ENCODE measurements at regions of chr12 and their contacts with region 1.

Region 1: DNA sequence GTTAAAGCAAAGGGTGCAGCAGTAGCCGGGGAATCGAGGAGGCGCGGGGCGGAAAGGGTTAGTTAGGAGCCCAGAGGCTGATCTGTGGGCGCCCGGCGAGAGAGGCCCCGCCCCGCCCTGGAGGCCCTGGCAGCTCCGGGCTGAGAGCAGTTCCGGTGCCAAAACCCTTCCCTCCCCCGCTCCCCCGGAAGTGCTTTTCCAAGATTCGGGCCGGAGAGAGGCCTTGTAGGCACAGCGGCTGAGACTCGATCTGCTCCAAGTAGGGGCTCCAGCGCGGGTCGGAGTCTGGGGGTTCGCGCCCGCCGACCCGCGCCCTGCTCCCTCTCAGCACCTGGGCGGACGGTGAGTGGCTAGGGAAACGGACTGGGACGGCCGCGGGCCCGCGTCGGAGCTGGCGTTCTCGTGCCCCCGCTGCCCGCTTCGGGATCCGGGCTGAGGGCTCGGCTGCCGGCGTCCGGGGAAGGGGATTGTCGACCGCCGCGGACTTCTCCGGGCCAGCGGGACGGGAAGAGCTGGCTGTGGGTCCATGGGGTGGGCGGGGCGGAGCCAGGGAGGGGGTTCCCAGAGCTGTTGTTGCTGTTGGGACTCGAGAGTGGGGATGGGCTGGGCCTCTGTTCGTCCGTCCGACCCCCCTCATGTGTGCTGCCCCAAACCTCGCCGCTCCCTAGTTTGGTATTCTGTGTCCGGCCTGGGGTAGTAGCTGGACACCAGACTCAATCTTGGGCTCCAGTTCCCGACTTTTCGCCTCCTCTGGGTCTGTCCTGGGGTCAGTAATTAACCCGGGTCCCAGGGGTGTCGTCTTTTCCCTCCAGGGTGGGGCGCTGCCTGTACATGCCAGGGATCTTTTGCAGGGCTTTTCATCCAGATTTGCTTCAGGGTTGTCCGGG is at the start of gene FRS2:
- DNase-seq: peak; percentile 72
- ATAC-seq: peak; percentile 95
- H3K4me3 ChIP-seq: peak within 1 kb of the TSS; percentile 78 to 87
- H3K27ac ChIP-seq: peak within 1 kb of the TSS; percentile 70
- H3K4me1 ChIP-seq: peaks cover 8 to 10% of the 10 kb centered on the region in 2 experiments; a peak in 3 of 4 replicates
- H3K27me3 ChIP-seq: no peaks in the 10 kb centered on the region
- CTCF ChIP-seq: peak; percentile 36 to 55 (median 52); a peak in 5 of 6 replicates
- POLR2A ChIP-seq: peak; percentile 84
- RAD21 ChIP-seq: peak; percentile 65
- total RNA-seq, gene FRS2: 14.7 TPM

Region 2: DNA sequence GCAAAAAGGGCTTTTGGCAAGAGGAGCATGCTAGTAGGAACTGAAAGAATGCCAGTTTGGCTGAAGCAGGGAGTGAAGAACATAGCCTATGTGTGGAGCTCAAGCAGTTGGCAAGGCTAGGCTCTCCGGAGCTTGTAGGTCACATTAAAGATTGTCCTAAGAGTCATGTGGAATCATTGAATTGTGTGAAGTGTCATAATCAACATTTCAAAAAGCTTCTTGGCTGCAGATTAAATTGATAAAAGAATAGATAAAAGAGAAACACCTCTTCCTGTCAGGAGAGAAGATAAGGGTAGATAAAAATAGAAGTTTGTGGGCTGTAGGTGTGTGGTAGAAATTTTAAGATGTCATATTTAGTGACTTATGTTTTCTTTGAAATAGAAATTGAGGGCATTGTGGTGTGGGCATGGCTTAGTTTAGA is 195.0 kb before region 1 on chr12:
- CTCF ChIA-PET with region 1: no interaction called
- POLR2A ChIA-PET with region 1: no interaction called
- RAD21 ChIA-PET with region 1: no interaction called
- intact Hi-C with region 1: no loop called
- DNase-seq: no peak
- ATAC-seq: no peak
- H3K4me3 ChIP-seq: no peak overlapping the region
- H3K27ac ChIP-seq: no peak overlapping the region
- H3K4me1 ChIP-seq: no peaks in the 10 kb centered on the region
- H3K27me3 ChIP-seq: no peaks in the 10 kb centered on the region
- CTCF ChIP-seq: no peak
- POLR2A ChIP-seq: no peak
- RAD21 ChIP-seq: no peak

Region 3: GRCh38 chr12:69502345-69503081 is 32.1 kb after region 1 on chr12:
- CTCF ChIA-PET with region 1: no interaction called
- POLR2A ChIA-PET with region 1: no interaction called
- RAD21 ChIA-PET with region 1: no interaction called
- intact Hi-C with region 1: no loop called
- DNase-seq: peak; percentile 52
- ATAC-seq: peak; percentile 94
- H3K4me3 ChIP-seq: no peak overlapping the region; a peak in 1 of 4 replicates
- H3K27ac ChIP-seq: peak overlapping the region; percentile 16; the same call in 1 of the 2 replicates
- H3K4me1 ChIP-seq: peaks cover 31 to 41% of the 10 kb centered on the region in 2 experiments
- H3K27me3 ChIP-seq: no peaks in the 10 kb centered on the region
- CTCF ChIP-seq: no peak
- POLR2A ChIP-seq: no peak
- RAD21 ChIP-seq: no peak

Region 4: DNA sequence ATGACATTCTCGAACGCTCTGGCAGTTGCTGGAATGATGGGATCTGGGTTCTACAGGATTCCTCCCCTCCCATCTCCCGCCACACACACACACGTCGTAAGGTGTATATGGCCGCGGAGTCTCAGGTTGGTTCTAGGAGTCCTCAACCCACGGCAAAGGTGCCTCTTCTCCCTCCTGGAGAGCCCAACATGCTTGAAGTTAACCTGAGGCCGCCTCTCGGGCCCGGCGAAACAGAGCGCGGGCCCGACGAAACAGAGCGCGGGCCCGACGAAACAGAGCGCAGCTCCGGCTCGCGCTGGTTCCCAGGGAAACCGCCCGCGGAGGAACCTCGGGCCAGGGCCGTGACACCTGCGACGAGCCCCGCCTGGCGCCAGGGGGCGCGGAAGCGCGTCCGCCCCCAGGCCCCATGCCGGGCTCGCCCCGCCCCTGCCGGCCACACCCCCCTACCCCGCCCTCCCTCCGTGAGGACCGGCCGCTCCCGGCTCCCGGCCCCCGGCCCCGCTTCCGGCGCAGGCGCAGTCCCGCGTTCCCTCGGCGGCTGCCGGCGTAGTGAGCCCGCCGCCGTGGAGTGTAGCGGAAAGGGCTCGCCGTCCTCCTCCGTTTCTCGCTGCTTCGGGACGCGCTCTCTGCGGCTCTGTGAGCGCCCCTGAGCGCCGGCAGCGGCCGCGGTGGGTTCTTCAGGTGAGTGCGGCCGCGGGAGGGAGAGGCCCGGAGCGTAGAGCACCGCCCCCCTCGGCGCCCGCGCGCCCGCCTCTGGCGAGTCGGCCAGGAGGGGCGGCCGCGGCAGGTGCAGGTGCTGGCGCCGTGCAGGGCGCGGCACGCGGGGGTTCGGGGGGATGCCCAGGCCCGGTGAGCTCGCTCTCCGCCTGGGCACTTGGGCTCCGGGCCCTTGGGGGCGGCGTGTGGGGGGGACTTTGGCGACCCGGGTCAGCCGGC is 268.2 kb after region 1 on chr12 and contains the start of gene RAB3IP:
- CTCF ChIA-PET with region 1: no interaction called
- POLR2A ChIA-PET with region 1: no interaction called
- RAD21 ChIA-PET with region 1: no interaction called
- intact Hi-C with region 1: loop called (anchors 2 kb)
- DNase-seq: peak; percentile 73
- ATAC-seq: peak; percentile 89
- H3K4me3 ChIP-seq: peak within 1 kb of the TSS; percentile 69 to 81
- H3K27ac ChIP-seq: peak within 1 kb of the TSS; percentile 82
- H3K4me1 ChIP-seq: peaks cover 7 to 14% of the 10 kb centered on the region in 2 experiments; a peak in 3 of 4 replicates
- H3K27me3 ChIP-seq: no peaks in the 10 kb centered on the region
- CTCF ChIP-seq: peak in 2 of 3 experiments; percentile 39 to 64; a peak in 4 of 6 replicates
- POLR2A ChIP-seq: no peak
- RAD21 ChIP-seq: no peak
- total RNA-seq, gene RAB3IP: 31.3 TPM

Measured in HCT116 (cell line).